CD8-positive, alpha-beta T cell (primary cell): ENCODE measurements at regions of chr1 and their contacts with region 1.

Region 1: DNA sequence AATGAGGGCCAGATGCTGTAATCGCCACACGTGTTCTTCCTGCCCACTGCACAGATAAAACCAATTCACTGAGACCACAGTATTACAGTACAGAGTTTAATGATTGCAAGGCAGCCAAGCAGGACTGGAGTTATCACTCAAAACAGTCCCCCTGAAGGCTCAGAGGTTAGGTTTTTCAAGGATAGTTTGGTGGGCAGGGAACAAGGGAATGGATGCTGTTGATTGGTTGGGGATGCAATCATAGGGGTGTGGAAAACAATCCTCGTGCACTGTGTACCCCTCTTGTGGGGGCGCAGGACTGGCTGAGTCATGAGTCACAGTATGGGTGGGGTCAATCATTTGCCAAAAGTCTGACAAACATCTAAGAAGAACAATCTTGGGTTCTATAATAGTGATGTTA is 12.4 kb upstream of the USP1 start:
- DNase-seq: no peak
- ATAC-seq: no peak
- H3K4me3 ChIP-seq: no peak overlapping the region
- H3K4me3 Mint-ChIP-seq: no peak overlapping the region
- H3K27ac ChIP-seq: no peak overlapping the region
- H3K27ac Mint-ChIP-seq: no peak overlapping the region
- H3K4me1 ChIP-seq: no peaks in the 10 kb centered on the region
- H3K4me1 Mint-ChIP-seq: no peaks in the 10 kb centered on the region
- H3K27me3 ChIP-seq: no peaks in the 10 kb centered on the region
- H3K27me3 Mint-ChIP-seq: no peaks in the 10 kb centered on the region
- CTCF ChIP-seq: no peak

Region 2: DNA sequence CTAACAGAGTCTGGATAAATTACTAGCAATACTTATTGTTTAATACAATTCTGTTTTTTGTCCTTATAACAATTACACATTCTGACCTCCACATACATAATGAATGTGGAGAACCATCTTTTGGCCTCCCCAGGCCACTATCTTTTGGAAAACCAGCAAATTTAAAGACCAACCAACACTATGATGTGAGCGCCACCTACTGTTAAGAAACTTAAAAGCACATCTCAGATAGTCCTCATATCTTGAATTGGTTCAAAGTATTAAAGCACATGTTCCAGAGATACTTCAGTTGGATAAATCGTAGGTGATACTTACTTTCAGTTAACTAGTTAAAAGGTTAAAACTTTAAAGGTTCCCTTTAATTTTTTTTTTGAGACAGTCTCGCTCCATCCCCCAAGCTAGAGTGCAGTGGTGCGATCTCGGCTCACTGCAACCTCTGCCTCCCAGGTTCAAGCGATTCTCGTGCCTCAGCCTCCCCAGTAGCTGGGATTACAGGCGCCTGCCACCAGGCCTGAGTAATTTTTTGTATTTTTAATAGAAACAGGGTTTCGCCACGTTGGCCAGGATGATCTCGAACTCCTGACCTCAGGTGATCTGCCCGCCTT is 16.9 kb before region 1 on chr1:
- CTCF ChIA-PET with region 1: no interaction called
- POLR2A ChIA-PET with region 1: no interaction called
- intact Hi-C with region 1: no loop called
- DNase-seq: peak in 3 of 9 experiments; percentile 18 to 65 (median 60)
- ATAC-seq: no peak
- H3K4me3 ChIP-seq: no peak overlapping the region
- H3K4me3 Mint-ChIP-seq: no peak overlapping the region
- H3K27ac ChIP-seq: no peak overlapping the region
- H3K27ac Mint-ChIP-seq: no peak overlapping the region
- H3K4me1 ChIP-seq: no peaks in the 10 kb centered on the region
- H3K4me1 Mint-ChIP-seq: no peaks in the 10 kb centered on the region
- H3K27me3 ChIP-seq: peaks cover 0 to 3% of the 10 kb centered on the region in 2 experiments
- H3K27me3 Mint-ChIP-seq: no peaks in the 10 kb centered on the region
- CTCF ChIP-seq: peak; percentile 97

Region 3: GRCh38 chr1:62452951-62453350 is 28.5 kb after region 1 on chr1:
- CTCF ChIA-PET with region 1: no interaction called
- POLR2A ChIA-PET with region 1: no interaction called
- intact Hi-C with region 1: loop called in 1 of 2 experiments (anchors 2 kb)
- DNase-seq: no peak
- ATAC-seq: no peak
- H3K4me3 ChIP-seq: no peak overlapping the region
- H3K4me3 Mint-ChIP-seq: no peak overlapping the region
- H3K27ac ChIP-seq: no peak overlapping the region
- H3K27ac Mint-ChIP-seq: no peak overlapping the region
- H3K4me1 ChIP-seq: peaks cover 4% of the 10 kb centered on the region
- H3K4me1 Mint-ChIP-seq: peaks cover 7% of the 10 kb centered on the region
- H3K27me3 ChIP-seq: no peaks in the 10 kb centered on the region
- H3K27me3 Mint-ChIP-seq: no peaks in the 10 kb centered on the region
- CTCF ChIP-seq: no peak

Region 4: GRCh38 chr1:62476525-62477219 is 52.3 kb after region 1 on chr1:
- CTCF ChIA-PET with region 1: no interaction called
- POLR2A ChIA-PET with region 1: no interaction called
- intact Hi-C with region 1: loop called in 1 of 2 experiments (anchors 5 kb)
- DNase-seq: no peak
- ATAC-seq: no peak
- H3K4me3 ChIP-seq: no peak overlapping the region
- H3K4me3 Mint-ChIP-seq: no peak overlapping the region
- H3K27ac ChIP-seq: no peak overlapping the region
- H3K27ac Mint-ChIP-seq: no peak overlapping the region
- H3K4me1 ChIP-seq: no peaks in the 10 kb centered on the region
- H3K4me1 Mint-ChIP-seq: no peaks in the 10 kb centered on the region
- H3K27me3 ChIP-seq: no peaks in the 10 kb centered on the region
- H3K27me3 Mint-ChIP-seq: no peaks in the 10 kb centered on the region
- CTCF ChIP-seq: no peak